SK-N-SH (cell line): ENCODE measurements at regions of chr22 and their contacts with region 1.

Region 1: DNA sequence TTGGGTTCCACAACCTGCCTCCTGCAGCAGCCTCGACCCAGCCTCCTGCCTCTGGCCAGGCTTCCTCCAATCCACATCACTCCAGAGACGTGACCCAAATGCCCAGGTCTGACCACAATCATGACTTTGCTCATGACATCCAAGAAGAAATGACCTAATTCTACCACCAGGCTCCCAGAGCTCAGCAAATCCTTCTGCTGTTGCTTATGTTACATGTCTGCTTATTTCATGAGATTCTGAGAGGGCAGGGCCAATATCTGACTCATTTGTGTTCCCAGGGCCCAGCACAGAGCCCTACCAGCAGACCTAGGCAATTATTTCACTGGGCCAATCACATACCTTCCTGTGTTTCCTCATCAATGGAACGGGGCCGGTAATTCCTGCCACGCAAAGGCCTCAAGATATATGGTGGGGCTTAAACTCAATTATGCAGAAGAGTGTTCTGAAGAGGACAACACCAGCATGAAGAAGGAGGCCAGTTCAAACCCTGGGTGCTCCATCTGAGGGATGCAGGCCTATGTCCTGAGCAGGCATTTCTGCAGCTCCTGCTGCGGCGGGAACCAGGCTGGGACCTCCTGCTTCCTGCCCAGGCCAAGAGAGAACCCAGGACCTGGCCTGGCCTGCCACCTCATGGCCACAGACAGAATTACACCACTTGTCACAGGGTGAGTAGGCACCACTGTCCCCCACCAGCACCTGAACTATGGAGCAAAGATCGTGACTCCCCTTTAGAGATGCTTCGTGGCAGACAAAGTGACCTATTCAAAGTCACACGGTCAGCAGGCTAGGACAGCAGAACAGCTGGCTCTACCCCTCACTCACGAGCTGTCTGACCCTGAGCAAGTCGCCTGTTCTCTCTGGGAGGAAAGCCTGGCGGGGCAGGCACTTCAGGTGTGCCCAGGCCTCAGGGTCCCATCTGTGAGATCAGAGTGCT is 5.9 kb downstream of the CENPM start:
- DNase-seq: peak; percentile 78
- H3K4me3 ChIP-seq: peak overlapping the region in 1 of 2 experiments; percentile 32; a peak in 1 of 4 replicates
- H3K27ac ChIP-seq: peak overlapping the region in 1 of 2 experiments; percentile 45; a peak in 2 of 4 replicates
- H3K4me1 ChIP-seq: peaks cover 0 to 11% of the 10 kb centered on the region in 2 experiments; a peak in 1 of 4 replicates
- H3K27me3 ChIP-seq: no peaks in the 10 kb centered on the region
- CTCF ChIP-seq: peak; percentile 65
- EP300 ChIP-seq: no peak
- RAD21 ChIP-seq: peak; percentile 87

Region 2: GRCh38 chr22:41746567-41747400 is 194.3 kb before region 1 on chr22:
- CTCF ChIA-PET with region 1: interaction called, 19 read pairs
- POLR2A ChIA-PET with region 1: no interaction called
- DNase-seq: peak; percentile 55
- H3K4me3 ChIP-seq: peak overlapping the region in 1 of 2 experiments; percentile 19; a peak in 1 of 4 replicates
- H3K27ac ChIP-seq: no peak overlapping the region
- H3K4me1 ChIP-seq: no peaks in the 10 kb centered on the region
- H3K27me3 ChIP-seq: no peaks in the 10 kb centered on the region; the same call in 1 of the 2 replicates
- CTCF ChIP-seq: peak; percentile 55
- EP300 ChIP-seq: no peak
- RAD21 ChIP-seq: peak; percentile 65

Region 3: DNA sequence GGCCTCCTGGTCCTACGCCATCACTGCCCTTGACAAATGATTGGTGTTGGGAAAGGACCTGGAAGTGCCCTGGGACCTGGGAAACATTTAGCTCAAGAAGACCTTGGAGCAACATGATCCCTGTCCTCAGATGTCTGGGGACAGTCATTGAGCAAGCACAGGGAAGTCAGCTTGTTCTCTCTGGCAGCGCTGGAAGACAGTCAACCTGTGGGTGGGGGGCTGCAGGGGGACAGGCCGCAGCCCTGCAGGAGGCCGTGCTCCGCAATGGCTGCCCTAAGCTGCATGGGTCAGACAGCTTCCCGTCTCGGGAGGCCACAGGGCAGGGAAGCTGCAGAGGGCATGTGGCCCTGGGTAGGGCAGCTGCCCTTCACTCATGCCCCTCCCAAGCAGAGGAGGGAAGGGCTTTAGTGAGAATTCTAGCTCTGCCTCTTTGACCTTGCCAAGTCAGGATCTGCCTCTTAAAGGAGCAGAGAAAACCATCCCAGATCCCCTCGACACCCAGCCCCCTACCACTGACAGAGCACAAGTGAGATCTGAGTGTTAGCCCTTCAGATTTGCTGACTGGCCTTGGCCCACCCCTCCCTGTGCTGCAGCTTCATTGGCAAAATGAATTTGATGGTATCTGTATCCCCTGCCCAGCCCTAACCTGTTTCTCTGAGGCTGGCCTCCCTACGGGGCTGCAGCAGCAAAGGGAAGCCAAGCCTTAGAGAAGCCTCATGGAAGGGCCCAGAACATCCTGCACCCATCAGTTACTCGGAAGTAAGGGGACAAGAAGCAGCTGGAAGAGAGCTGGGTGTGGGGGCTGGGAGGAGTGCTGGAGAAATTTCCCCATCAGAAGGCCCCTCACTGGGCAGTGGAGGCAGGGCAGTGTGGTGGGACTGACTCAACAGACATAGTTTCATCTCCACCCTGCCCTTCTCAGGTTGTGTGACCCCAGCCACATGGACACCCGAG is 114.4 kb before region 1 on chr22:
- CTCF ChIA-PET with region 1: interaction called, 18 read pairs
- POLR2A ChIA-PET with region 1: no interaction called
- DNase-seq: no peak
- H3K4me3 ChIP-seq: no peak overlapping the region
- H3K27ac ChIP-seq: no peak overlapping the region
- H3K4me1 ChIP-seq: no peaks in the 10 kb centered on the region; a peak in 1 of 4 replicates
- H3K27me3 ChIP-seq: no peaks in the 10 kb centered on the region
- CTCF ChIP-seq: no peak
- EP300 ChIP-seq: no peak
- RAD21 ChIP-seq: no peak